SK-N-SH (cell line): ENCODE measurements at regions of chr2 and their contacts with region 1.

Region 1: GRCh38 chr2:74250189-74250631 is 51.8 kb downstream of the MTHFD2 start:
- DNase-seq: peak; percentile 85
- H3K4me3 ChIP-seq: no peak overlapping the region
- H3K27ac ChIP-seq: no peak overlapping the region
- H3K4me1 ChIP-seq: no peaks in the 10 kb centered on the region
- H3K27me3 ChIP-seq: no peaks in the 10 kb centered on the region
- CTCF ChIP-seq: peak; percentile 88
- EP300 ChIP-seq: no peak
- RAD21 ChIP-seq: peak; percentile 81

Region 2: GRCh38 chr2:74155830-74156229 is 94.4 kb before region 1 on chr2:
- CTCF ChIA-PET with region 1: no interaction called
- POLR2A ChIA-PET with region 1: no interaction called
- DNase-seq: no peak
- H3K4me3 ChIP-seq: no peak overlapping the region
- H3K27ac ChIP-seq: no peak overlapping the region
- H3K4me1 ChIP-seq: no peaks in the 10 kb centered on the region
- H3K27me3 ChIP-seq: no peaks in the 10 kb centered on the region
- CTCF ChIP-seq: no peak
- EP300 ChIP-seq: no peak
- RAD21 ChIP-seq: no peak

Region 3: DNA sequence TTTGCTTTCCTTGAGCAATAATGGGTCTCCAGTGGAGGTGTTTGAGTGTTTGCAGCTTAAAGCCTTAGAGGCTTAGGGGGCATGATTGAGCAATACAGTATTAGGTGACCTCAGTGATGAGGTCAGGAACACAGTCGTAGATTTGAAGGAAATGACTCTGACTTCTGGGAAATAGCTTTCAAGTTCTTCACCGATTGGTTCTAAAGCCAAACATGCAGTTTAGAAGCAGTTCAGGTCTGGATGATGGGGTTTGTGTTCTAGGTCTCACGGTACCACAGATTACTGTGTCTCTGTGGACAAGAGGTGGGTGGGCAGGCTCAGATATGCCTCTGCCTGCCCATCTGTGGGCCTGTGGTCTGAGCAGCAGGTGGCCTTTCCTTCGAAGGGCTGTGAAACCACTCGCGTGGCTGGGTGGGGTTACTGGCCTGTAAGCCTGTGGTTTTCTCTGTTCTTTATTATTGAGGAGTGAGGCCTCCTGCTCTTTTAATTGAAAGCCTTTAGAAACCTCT is 44.0 kb before region 1 on chr2:
- CTCF ChIA-PET with region 1: interaction called, 10 read pairs
- POLR2A ChIA-PET with region 1: no interaction called
- DNase-seq: no peak
- H3K4me3 ChIP-seq: no peak overlapping the region
- H3K27ac ChIP-seq: no peak overlapping the region
- H3K4me1 ChIP-seq: peaks cover 0 to 12% of the 10 kb centered on the region in 2 experiments; a peak in 2 of 4 replicates
- H3K27me3 ChIP-seq: no peaks in the 10 kb centered on the region
- CTCF ChIP-seq: no peak
- EP300 ChIP-seq: no peak
- RAD21 ChIP-seq: no peak

Region 4: DNA sequence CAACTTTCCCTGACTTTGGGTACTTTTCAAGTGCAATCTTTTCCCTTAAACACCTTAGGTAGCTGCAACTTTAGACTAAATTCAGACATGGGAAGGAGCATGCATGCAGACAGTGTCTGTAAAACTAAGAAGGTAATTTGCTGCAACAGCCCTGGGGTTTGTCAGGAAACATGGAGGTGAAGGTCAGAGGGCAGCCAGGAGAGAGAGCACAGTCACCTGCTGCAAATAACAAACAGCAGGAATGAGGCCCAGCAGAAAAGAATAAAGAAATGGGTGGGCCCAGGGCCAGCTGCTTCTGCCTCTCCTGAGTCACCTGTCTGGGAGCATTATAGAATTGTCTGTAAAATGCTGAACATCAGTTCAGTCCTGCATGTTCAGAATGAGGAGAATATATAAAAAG is 16.6 kb before region 1 on chr2:
- CTCF ChIA-PET with region 1: interaction called, 15 read pairs
- POLR2A ChIA-PET with region 1: interaction called, 4 read pairs
- DNase-seq: no peak
- H3K4me3 ChIP-seq: no peak overlapping the region
- H3K27ac ChIP-seq: no peak overlapping the region
- H3K4me1 ChIP-seq: no peaks in the 10 kb centered on the region
- H3K27me3 ChIP-seq: no peaks in the 10 kb centered on the region
- CTCF ChIP-seq: no peak
- EP300 ChIP-seq: no peak
- RAD21 ChIP-seq: no peak

Region 5: GRCh38 chr2:74238879-74239278 is 11.3 kb before region 1 on chr2:
- CTCF ChIA-PET with region 1: interaction called, 15 read pairs
- POLR2A ChIA-PET with region 1: interaction called, 4 read pairs
- DNase-seq: no peak
- H3K4me3 ChIP-seq: no peak overlapping the region
- H3K27ac ChIP-seq: no peak overlapping the region
- H3K4me1 ChIP-seq: no peaks in the 10 kb centered on the region
- H3K27me3 ChIP-seq: no peaks in the 10 kb centered on the region
- CTCF ChIP-seq: no peak
- EP300 ChIP-seq: no peak
- RAD21 ChIP-seq: no peak

Region 6: DNA sequence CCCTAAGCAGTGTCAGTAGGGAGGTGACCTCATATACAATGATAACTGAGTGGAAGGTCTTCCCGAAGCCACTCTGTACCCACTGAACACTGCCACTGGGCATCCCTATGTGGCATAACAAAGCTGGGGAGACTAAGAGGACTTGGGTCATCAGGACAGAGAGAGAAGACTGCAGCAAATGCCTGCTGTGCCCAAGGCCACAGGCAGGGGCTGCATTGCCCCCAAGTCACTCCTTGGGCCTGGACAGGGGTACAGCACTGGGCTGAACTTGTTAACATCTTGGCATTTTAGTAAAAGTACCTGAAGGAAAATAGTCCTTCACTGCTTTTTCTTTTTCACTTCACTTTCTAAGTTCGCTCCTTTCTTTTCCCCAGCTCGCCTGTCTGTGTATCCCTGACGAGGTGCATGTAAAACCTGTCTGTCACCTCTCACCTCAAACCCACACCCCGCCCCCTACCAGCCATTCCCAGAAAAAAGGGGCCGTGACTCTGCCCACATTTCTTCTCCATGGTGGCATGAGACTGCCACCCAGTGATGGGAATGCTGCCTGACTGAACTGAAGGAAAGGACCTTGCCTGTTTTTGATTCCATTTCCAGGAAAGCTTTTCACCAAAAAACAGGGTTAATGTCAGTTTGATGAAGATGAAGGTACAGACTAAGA is 11.1 kb after region 1 on chr2:
- CTCF ChIA-PET with region 1: interaction called, 35 read pairs
- POLR2A ChIA-PET with region 1: no interaction called
- DNase-seq: peak; percentile 61
- H3K4me3 ChIP-seq: no peak overlapping the region; a peak in 1 of 4 replicates
- H3K27ac ChIP-seq: no peak overlapping the region
- H3K4me1 ChIP-seq: no peaks in the 10 kb centered on the region
- H3K27me3 ChIP-seq: no peaks in the 10 kb centered on the region
- CTCF ChIP-seq: peak; percentile 61
- EP300 ChIP-seq: no peak
- RAD21 ChIP-seq: peak; percentile 70

Region 7: DNA sequence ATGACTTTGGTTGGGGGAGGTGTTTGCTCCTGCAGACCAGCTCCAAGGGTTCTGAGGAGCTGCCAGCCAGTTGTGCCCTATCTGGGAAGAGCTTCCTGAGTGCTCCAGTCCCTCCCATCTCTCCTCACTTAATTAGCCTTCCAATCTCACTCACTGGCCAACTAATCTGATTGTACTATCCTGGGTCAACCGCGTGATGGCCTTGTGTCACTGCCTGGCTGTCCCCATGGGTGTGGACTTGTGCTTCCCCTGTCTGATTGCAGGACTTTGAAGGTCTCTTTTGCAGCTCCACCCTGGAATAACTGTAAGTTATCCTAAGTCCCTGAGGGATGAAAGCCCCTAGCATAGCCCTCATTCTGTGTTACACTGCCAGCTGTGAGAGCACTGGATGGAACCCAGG is 28.0 kb after region 1 on chr2:
- CTCF ChIA-PET with region 1: interaction called, 39 read pairs
- POLR2A ChIA-PET with region 1: no interaction called
- DNase-seq: peak; percentile 71
- H3K4me3 ChIP-seq: no peak overlapping the region
- H3K27ac ChIP-seq: no peak overlapping the region
- H3K4me1 ChIP-seq: peaks cover 0 to 13% of the 10 kb centered on the region in 2 experiments; a peak in 2 of 4 replicates
- H3K27me3 ChIP-seq: no peaks in the 10 kb centered on the region
- CTCF ChIP-seq: no peak
- EP300 ChIP-seq: no peak
- RAD21 ChIP-seq: peak; percentile 53

Region 8: DNA sequence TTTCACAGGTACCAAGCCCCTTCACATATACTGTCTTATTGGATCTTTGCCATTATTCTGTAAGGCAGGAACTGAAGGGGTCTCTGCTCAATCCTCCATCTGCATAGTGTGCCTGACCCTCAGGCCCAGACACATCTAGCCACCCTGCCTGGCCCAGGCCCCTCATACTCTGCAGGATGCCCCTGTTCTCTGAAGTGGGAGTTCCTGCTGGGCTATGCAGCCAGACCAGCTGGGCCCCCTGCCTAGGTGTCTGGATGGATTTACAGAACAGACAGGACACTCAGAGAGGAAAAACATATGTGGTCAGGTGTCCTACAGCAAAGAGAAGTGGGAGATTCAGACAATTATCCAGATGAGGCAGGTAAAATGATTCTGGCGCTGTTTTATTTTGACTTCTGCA is 51.1 kb after region 1 on chr2:
- CTCF ChIA-PET with region 1: no interaction called
- POLR2A ChIA-PET with region 1: no interaction called
- DNase-seq: no peak
- H3K4me3 ChIP-seq: no peak overlapping the region
- H3K27ac ChIP-seq: no peak overlapping the region
- H3K4me1 ChIP-seq: no peaks in the 10 kb centered on the region; a peak in 1 of 4 replicates
- H3K27me3 ChIP-seq: no peaks in the 10 kb centered on the region
- CTCF ChIP-seq: no peak
- EP300 ChIP-seq: no peak
- RAD21 ChIP-seq: no peak

Region 9: DNA sequence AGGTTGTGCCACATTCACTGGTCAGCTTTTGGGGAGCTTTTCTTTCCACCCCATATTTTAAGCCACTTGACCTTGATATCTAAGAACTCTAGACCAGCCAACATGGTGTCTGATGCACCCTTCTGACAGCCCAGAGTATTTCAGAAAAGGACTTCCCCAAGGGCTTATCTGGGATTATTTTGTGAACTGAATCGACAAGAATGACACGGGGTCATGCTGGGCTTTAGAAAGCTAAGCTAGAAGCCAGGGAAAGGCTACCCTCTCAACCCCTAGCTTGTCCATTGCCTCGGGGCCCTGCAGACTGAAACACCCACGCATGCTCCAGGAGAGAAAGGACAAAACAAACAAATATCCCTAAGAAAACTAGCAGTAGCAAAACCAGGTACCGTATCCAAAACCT is 77.0 kb after region 1 on chr2:
- CTCF ChIA-PET with region 1: interaction called, 125 read pairs
- POLR2A ChIA-PET with region 1: no interaction called
- DNase-seq: no peak
- H3K4me3 ChIP-seq: no peak overlapping the region
- H3K27ac ChIP-seq: no peak overlapping the region
- H3K4me1 ChIP-seq: no peaks in the 10 kb centered on the region
- H3K27me3 ChIP-seq: no peaks in the 10 kb centered on the region
- CTCF ChIP-seq: no peak
- EP300 ChIP-seq: no peak
- RAD21 ChIP-seq: no peak

Region 10: DNA sequence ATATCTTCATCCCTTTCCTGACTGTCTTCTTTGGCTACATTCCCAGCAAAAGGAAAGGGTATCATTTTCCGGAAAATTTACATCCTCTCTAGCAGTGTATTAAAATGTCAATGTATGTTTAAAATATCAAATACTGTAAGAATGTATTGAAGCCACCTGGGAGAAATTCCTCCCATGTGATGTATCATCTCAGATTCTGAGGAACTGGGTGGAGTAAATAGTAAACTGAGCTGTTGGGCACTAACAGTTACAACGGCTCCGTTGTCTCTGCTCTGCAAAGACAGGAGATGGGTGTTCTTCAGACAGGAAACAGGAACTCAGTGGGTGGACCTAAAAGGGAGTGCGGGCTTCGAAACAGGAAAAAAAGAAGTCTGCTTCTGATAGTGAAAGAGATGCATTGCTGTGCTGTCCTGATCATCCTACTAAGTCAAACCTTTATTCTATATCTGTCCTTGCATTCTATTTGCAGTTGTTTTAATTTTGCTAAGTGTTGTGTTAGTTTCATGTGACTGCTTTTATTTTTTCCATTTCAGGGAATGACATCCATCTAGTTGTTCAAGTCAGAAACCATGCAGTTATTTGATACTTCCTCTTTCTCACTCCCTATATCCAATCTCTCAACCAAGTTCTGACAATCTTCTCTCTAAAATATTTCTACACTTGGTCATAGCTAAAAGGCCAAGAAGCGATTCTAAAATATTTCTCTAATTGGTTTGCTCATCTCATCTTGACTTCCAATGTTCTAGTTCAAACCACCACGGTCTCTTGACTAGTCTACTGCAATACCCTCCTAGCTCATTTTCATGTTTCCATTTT is 323.7 kb after region 1 on chr2:
- CTCF ChIA-PET with region 1: no interaction called
- POLR2A ChIA-PET with region 1: no interaction called
- DNase-seq: no peak
- H3K4me3 ChIP-seq: peak overlapping the region; percentile 29 to 36; a peak in 2 of 4 replicates
- H3K27ac ChIP-seq: peak overlapping the region; percentile 68 to 82
- H3K4me1 ChIP-seq: peaks cover 7 to 21% of the 10 kb centered on the region in 2 experiments
- H3K27me3 ChIP-seq: no peaks in the 10 kb centered on the region
- CTCF ChIP-seq: no peak
- EP300 ChIP-seq: peak in 1 of 2 experiments; percentile 22; a peak in 1 of 4 replicates
- RAD21 ChIP-seq: no peak; the same call in 1 of the 2 replicates